ENCODE measurements at regions of chr10 and their contacts with region 1.

Region 1: DNA sequence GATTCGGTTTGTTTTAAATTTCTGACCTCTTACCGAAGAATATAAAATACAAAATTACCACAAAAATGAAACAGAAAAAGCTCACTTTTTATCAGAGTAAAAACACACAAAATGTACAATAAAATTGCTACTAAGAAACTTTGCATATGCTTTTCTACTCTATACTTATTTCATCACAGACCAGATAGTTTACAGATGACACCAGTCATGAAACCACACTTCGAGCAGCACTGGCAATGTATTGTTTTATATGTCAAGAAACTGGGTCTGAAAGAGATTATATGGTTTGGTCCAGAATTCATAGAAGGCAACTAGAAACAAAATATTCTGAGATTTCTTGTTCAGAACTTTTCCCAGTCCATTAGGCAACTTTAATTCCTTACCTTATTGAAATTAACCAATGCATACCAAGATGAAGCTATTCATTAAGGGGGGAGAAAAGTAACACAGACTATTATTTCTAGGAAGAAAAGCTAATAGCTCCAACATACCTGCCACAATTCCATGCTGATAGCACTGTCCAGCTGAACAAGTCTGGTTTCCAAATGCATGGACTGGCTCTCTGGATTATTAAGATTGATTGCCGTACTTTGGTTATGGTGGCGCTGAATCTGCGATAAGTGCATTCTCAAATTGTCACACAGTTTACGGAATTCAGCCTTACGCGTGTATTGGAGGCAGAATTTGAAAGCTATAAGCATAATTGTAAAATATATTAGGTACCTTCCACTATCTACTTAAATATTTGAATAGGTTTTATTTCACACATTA is 10.0 kb downstream of the EIF3A start:
- DNase-seq: no peak
- H3K4me3 ChIP-seq: no peak overlapping the region
- H3K27ac ChIP-seq: no peak overlapping the region
- H3K27me3 ChIP-seq: no peaks in the 10 kb centered on the region
- CTCF ChIP-seq: no peak

Region 2: GRCh38 chr10:118754720-118755480 is 315.7 kb before region 1 on chr10 and contains the start of gene CACUL1:
- CTCF ChIA-PET with region 1: no interaction called
- POLR2A ChIA-PET with region 1: interaction called, 11 read pairs
- DNase-seq: peak; percentile 100
- H3K4me3 ChIP-seq: peak within 1 kb of the TSS; percentile 95
- H3K27ac ChIP-seq: peak within 1 kb of the TSS; percentile 81
- H3K27me3 ChIP-seq: no peaks in the 10 kb centered on the region
- CTCF ChIP-seq: no peak
- polyA plus RNA-seq, gene CACUL1: 12.4 and 15.3 TPM in 2 replicates

Region 3: GRCh38 chr10:119020629-119020950 is 50.0 kb before region 1 on chr10:
- CTCF ChIA-PET with region 1: no interaction called
- POLR2A ChIA-PET with region 1: interaction called, 12 read pairs
- DNase-seq: no peak
- H3K4me3 ChIP-seq: no peak overlapping the region
- H3K27ac ChIP-seq: no peak overlapping the region
- H3K27me3 ChIP-seq: peaks cover 12% of the 10 kb centered on the region
- CTCF ChIP-seq: no peak

Region 4: GRCh38 chr10:119090968-119091367 is 20.4 kb after region 1 on chr10:
- CTCF ChIA-PET with region 1: no interaction called
- POLR2A ChIA-PET with region 1: no interaction called
- DNase-seq: no peak
- H3K4me3 ChIP-seq: no peak overlapping the region
- H3K27ac ChIP-seq: no peak overlapping the region
- H3K27me3 ChIP-seq: no peaks in the 10 kb centered on the region
- CTCF ChIP-seq: no peak

Measured in AG04450 (cell line).